Common myeloid progenitor, CD34-positive (primary cell): ENCODE measurements at regions of chr6 and their contacts with region 1.

Region 1: DNA sequence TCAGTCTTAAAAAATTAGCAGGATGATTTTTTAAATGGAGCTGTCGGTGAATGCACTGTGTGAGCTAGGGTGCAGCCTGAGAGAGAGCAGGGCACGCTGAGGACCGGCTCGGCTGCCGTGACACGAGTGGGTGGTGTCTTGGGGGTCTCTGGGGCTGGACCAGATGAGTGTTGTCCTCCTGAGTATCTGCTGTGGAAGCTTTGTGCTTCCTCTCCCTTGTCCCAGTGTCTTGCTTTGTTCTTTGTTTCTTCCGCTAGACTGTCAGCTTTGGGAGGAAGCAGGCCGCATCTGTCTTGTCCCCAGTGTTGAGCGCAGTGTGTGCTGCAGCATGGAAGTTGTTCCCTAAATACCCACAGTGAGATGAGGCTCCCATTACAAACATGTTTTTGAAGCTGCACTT is 89.4 kb downstream of the RTN4IP1 start:
- DNase-seq: peak in 2 of 3 donors; percentile 25 to 31
- H3K4me3 ChIP-seq: no peak overlapping the region
- H3K27ac ChIP-seq: peak overlapping the region in 1 of 2 experiments; percentile 40
- H3K4me1 ChIP-seq: peaks cover 23 to 33% (median 31%) of the 10 kb centered on the region in 4 experiments
- H3K27me3 ChIP-seq: no peaks in the 10 kb centered on the region

Region 2: DNA sequence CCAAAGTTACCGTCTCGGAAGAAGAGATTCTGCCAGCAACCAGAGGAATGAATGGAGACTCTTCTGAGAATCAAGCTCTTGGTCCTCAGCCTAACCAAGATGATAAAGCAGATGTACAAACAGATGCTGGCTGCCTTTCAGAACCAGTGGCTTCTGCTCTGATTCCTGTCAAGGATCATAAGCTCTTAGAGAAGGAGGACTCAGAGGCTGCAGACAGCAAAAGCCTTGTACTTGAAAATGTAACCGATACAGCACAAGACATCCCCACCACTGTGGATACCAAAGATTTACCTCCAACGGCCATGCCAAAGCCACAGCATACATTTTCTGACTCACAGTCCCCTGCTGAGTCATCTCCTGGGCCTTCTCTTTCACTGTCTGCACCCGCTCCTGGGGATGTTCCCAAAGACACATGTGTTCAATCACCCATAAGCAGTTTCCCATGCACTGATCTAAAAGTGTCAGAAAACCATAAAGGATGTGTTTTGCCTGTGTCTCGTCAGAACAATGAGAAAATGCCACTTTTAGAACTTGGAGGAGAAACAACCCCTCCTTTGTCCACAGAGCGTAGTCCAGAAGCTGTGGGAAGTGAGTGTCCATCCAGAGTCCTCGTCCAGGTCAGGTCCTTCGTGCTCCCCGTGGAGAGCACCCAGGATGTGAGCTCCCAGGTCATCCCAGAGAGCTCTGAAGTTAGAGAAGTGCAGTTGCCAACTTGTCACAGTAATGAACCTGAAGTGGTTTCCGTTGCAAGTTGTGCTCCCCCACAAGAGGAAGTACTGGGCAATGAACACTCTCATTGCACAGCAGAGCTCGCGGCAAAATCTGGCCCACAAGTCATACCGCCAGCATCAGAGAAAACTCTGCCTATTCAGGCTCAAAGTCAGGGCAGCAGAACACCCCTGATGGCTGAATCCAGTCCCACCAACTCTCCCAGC is 20.2 kb before region 1 on chr6:
- CTCF ChIA-PET with region 1: interaction called, 14 read pairs
- POLR2A ChIA-PET with region 1: no interaction called
- DNase-seq: peak; percentile 82 to 97 (median 96)
- H3K4me3 ChIP-seq: peak overlapping the region in 6 of 7 experiments; percentile 7 to 58 (median 45)
- H3K27ac ChIP-seq: peak overlapping the region in 1 of 2 experiments; percentile 59
- H3K4me1 ChIP-seq: peaks cover 57 to 94% (median 73%) of the 10 kb centered on the region in 4 experiments
- H3K27me3 ChIP-seq: no peaks in the 10 kb centered on the region

Region 3: DNA sequence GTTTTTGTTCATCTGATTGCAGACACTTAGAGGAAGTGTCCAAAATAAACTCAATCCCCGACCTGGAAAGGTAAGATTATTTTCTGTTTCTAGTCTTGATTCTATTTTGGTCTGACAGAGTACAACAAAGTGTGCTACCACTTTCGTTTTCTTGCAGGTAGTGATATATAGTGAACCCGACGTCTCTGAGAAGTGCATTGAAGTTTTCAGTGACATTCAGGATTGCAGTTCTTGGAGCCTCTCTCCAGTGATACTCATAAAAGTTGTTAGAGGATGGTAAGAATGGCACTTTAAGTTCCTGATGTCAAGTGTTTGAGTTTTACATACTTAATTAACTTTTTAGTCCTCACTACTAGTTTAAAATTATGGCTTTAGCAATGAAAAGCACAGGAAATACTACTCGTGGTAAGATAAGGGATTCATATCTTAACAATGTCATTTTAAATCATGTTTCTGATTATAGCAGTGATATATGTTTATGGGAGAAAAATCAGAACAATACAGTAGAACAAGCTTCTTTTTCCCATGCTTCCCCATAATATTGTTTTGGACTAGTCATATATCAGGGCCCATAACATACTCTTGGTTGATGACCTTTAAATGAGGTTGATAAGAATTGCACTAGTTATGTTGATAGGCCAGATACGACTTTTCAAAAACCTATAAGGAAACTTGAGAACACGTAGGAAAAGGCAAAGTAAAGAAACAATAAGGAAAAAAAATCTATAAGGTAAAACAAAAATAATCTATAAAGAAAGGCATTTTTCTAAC is 14.6 kb before region 1 on chr6:
- CTCF ChIA-PET with region 1: interaction called, 14 read pairs
- POLR2A ChIA-PET with region 1: no interaction called
- DNase-seq: peak in 2 of 3 donors; percentile 55 to 67
- H3K4me3 ChIP-seq: peak overlapping the region in 6 of 7 experiments; percentile 35 to 75 (median 50)
- H3K27ac ChIP-seq: peak overlapping the region; percentile 8 to 11
- H3K4me1 ChIP-seq: peaks cover 19 to 51% (median 45%) of the 10 kb centered on the region in 4 experiments
- H3K27me3 ChIP-seq: no peaks in the 10 kb centered on the region

Region 4: DNA sequence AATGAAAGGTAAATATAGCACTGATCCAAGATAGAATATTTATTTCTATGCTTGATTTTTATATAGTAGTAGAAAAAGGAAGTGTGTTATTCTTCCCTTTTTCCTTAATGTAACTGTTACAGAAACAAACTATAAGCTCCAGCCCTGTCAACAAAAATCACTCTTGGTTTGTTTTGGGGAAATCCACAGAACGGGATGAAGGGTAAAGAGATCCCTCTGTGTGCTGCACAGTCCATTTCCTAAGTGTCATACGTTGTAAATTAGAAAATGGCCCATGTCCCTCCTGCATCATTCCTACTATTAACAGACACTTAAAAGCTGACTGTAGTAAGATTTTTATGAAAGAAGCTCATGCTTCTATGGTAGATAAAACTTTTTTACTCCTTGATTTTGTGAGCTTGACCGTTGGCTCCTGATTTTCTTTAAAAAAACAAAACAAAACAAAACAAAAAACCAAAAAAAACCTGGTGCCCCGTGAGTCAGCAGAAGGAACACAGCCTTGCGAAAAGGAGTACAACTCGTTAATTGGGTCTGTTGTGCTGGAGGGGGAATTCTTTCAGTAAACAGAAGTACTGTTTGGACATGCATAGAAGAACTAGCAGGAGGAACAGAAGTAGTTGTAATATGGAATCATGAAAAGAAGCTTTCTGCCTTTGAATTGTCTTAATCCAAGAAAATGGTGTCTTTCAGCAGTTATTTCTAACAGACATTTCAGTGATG is 21.9 kb after region 1 on chr6:
- CTCF ChIA-PET with region 1: interaction called, 10 read pairs
- POLR2A ChIA-PET with region 1: no interaction called
- DNase-seq: peak in 2 of 3 donors; percentile 47 to 53
- H3K4me3 ChIP-seq: peak overlapping the region in 1 of 7 experiments; percentile 24
- H3K27ac ChIP-seq: peak overlapping the region; percentile 36 to 76
- H3K4me1 ChIP-seq: peaks cover 8 to 17% (median 11%) of the 10 kb centered on the region in 4 experiments
- H3K27me3 ChIP-seq: no peaks in the 10 kb centered on the region